ENCODE measurements at regions of chr12 and their contacts with region 1.

Region 1: DNA sequence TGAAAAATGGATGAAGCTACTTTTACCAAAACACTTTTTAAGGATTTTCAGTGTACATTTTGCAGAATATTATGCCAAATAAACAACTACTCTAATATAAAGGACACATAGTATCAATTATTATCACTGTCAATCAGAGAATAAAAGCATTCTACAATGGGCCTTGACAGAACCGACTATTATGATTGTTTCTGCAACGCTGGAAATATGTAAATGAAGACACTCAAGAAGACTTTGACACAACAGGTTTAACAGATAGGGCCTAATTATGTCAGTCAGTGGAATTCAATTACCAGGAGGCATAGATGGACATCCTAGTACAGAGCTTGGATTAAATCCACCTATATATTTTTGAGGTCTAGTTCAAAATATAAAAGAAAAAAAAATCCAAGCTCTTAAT is 58.7 kb upstream of the SOX5 start:
- DNase-seq: no peak
- H3K4me3 ChIP-seq: no peak overlapping the region
- H3K27ac ChIP-seq: no peak overlapping the region
- H3K4me1 ChIP-seq: no peaks in the 10 kb centered on the region
- H3K27me3 ChIP-seq: no peaks in the 10 kb centered on the region
- CTCF ChIP-seq: no peak
- EP300 ChIP-seq: no peak
- POLR2A ChIP-seq: no peak

Region 2: GRCh38 chr12:22206116-22206728 is 1801.9 kb before region 1 on chr12:
- intact Hi-C with region 1: loop called in 1 of 4 experiments (anchors 5 kb)
- DNase-seq: no peak
- H3K4me3 ChIP-seq: no peak overlapping the region
- H3K27ac ChIP-seq: no peak overlapping the region
- H3K4me1 ChIP-seq: no peaks in the 10 kb centered on the region
- H3K27me3 ChIP-seq: no peaks in the 10 kb centered on the region
- CTCF ChIP-seq: no peak
- EP300 ChIP-seq: no peak
- POLR2A ChIP-seq: no peak